ENCODE measurements at regions of chr12 and their contacts with region 1.

Region 1: GRCh38 chr12:5745265-5745888 is 199.7 kb downstream of the ANO2 start:
- DNase-seq: peak; percentile 18
- H3K4me3 ChIP-seq: no peak overlapping the region
- H3K27ac ChIP-seq: no peak overlapping the region
- H3K4me1 ChIP-seq: no peaks in the 10 kb centered on the region
- H3K27me3 ChIP-seq: no peaks in the 10 kb centered on the region
- CTCF ChIP-seq: peak; percentile 58 to 84

Region 2: GRCh38 chr12:5417500-5417899 is 327.9 kb before region 1 on chr12:
- CTCF ChIA-PET with region 1: no interaction called
- dilution Hi-C with region 1: no loop called
- in situ Hi-C with region 1: no loop called
- intact Hi-C with region 1: no loop called
- DNase-seq: no peak
- H3K4me3 ChIP-seq: no peak overlapping the region
- H3K27ac ChIP-seq: no peak overlapping the region
- H3K4me1 ChIP-seq: no peaks in the 10 kb centered on the region
- H3K27me3 ChIP-seq: peaks cover 2% of the 10 kb centered on the region
- CTCF ChIP-seq: no peak

Region 3: DNA sequence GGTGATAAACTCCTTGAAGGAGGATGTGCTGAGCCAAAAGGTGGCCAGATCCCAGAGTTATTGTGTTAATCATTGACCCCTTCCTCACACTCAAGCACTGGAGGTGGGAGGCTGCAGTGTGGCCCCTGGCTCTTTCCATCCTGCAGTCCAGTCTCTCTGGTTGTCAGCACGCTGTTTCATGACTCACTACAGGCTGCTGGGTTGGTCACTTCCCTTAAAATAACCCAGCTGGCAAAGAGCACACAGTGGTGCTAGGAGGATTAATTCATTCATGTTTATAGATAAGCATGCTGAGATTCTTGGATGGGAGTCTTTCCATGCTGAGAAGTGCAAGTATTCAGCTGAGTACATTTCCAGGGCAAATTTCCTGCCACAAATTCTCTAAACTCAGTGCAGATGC is 29.1 kb before region 1 on chr12:
- CTCF ChIA-PET with region 1: no interaction called
- dilution Hi-C with region 1: no loop called
- in situ Hi-C with region 1: no loop called
- intact Hi-C with region 1: no loop called
- DNase-seq: no peak
- H3K4me3 ChIP-seq: no peak overlapping the region
- H3K27ac ChIP-seq: no peak overlapping the region
- H3K4me1 ChIP-seq: no peaks in the 10 kb centered on the region
- H3K27me3 ChIP-seq: no peaks in the 10 kb centered on the region
- CTCF ChIP-seq: no peak

Region 4: GRCh38 chr12:5872735-5873134 is 127.4 kb after region 1 on chr12:
- CTCF ChIA-PET with region 1: interaction called, 3 read pairs
- dilution Hi-C with region 1: no loop called
- in situ Hi-C with region 1: no loop called
- intact Hi-C with region 1: loop called (anchors 1 kb)
- DNase-seq: no peak
- H3K4me3 ChIP-seq: no peak overlapping the region
- H3K27ac ChIP-seq: no peak overlapping the region
- H3K4me1 ChIP-seq: no peaks in the 10 kb centered on the region
- H3K27me3 ChIP-seq: no peaks in the 10 kb centered on the region
- CTCF ChIP-seq: peak in 1 of 2 donors; percentile 16

Region 5: DNA sequence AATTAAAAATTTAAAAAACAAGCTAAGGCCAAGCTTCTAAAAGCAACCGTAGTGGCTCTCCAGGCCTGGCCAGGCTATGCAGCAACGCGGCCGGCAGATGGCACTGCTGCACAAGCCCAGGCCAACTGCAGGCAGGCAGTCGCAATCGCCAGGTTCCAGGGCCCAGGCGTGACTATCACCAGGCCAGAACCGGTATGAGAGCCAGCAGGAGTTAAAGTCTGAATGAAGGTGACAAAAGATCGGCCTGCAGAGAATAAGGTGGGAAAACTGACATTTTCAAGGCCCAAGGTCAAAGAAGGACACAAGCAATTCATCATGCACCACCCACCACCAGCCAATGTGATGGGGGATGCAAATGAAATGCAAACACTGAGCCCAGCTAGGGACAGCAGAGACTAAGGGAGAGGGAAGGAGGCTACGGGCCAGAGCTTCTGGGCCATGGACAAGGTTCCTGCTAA is 243.3 kb after region 1 on chr12:
- CTCF ChIA-PET with region 1: no interaction called
- dilution Hi-C with region 1: no loop called
- in situ Hi-C with region 1: no loop called
- intact Hi-C with region 1: loop called (anchors 1 kb)
- DNase-seq: peak; percentile 54
- H3K4me3 ChIP-seq: no peak overlapping the region
- H3K27ac ChIP-seq: no peak overlapping the region
- H3K4me1 ChIP-seq: no peaks in the 10 kb centered on the region
- H3K27me3 ChIP-seq: no peaks in the 10 kb centered on the region
- CTCF ChIP-seq: peak; percentile 97

Measured in mammary epithelial cell (primary cell).